Endothelial cell of umbilical vein (primary cell): ENCODE measurements at regions of chr20 and their contacts with region 1.

Region 1: GRCh38 chr20:3753098-3753980 is 14.2 kb downstream of the ADISSP start:
- DNase-seq: peak; percentile 66
- H3K4me3 ChIP-seq: no peak overlapping the region
- H3K27ac ChIP-seq: no peak overlapping the region
- H3K4me1 ChIP-seq: no peaks in the 10 kb centered on the region
- H3K27me3 ChIP-seq: no peaks in the 10 kb centered on the region
- CTCF ChIP-seq: peak; percentile 79 to 89
- POLR2A ChIP-seq: peak; percentile 55

Region 2: GRCh38 chr20:3470627-3471396 is 282.5 kb before region 1 on chr20 and contains the start of gene ATRN:
- CTCF ChIA-PET with region 1: no interaction called
- POLR2A ChIA-PET with region 1: no interaction called
- dilution Hi-C with region 1: no loop called
- intact Hi-C with region 1: no loop called
- DNase-seq: peak; percentile 93
- H3K4me3 ChIP-seq: peak within 1 kb of the TSS; percentile 79 to 87 (median 85)
- H3K27ac ChIP-seq: peak within 1 kb of the TSS; percentile 79
- H3K4me1 ChIP-seq: peaks cover 11% of the 10 kb centered on the region
- H3K27me3 ChIP-seq: peaks cover 10 to 16% of the 10 kb centered on the region in 2 experiments
- CTCF ChIP-seq: no peak
- POLR2A ChIP-seq: peak; percentile 98
- total RNA-seq, gene ATRN: 33.1 and 35.1 TPM in 2 replicates

Region 3: DNA sequence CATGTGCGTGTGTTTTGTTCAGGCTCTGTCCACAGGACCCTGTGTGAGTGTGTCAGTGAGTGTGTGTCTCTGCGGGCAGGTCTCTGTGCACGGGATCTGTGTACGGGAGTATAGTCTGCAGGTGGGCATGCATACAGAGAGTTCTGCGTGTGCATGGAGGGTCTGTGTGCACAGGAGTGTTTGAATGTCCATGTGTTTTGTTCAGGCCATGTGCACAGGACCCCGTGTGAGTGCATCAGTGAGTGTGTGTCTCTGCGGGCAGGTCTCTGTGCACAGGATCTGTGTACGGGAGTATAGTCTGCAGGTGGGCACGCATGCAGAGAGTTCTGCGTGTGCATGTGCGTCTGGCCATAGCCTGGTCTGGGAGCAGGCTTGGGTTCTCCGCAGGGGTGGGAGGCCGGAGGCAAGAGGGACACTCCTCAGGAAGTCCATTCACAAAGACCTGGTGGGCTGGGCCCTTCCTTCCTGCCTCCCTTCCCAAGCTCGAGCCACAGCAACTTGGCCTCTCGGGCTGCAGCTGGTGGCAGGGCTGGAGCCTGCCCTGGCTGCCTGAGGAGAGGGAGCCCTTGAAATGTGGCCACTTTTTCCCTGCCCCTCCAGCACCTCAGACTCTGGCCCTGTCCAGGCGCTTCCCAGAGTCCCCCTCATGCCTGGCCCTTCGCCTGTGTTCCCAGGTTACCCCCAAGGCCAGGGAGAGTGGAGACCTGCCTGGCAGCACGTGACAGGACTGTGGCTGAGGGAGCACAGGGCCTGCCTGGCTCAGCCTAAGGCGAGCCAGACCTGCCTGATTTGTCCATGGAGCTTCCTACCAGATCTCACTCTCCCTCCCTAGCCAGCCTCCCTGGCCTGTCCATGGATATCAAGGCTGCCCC is 14.0 kb before region 1 on chr20:
- CTCF ChIA-PET with region 1: interaction called, 18 read pairs
- POLR2A ChIA-PET with region 1: no interaction called
- dilution Hi-C with region 1: no loop called
- intact Hi-C with region 1: no loop called
- DNase-seq: peak; percentile 49
- H3K4me3 ChIP-seq: no peak overlapping the region
- H3K27ac ChIP-seq: no peak overlapping the region
- H3K4me1 ChIP-seq: peaks cover 12% of the 10 kb centered on the region
- H3K27me3 ChIP-seq: no peaks in the 10 kb centered on the region
- CTCF ChIP-seq: no peak
- POLR2A ChIP-seq: peak; percentile 61

Region 4: DNA sequence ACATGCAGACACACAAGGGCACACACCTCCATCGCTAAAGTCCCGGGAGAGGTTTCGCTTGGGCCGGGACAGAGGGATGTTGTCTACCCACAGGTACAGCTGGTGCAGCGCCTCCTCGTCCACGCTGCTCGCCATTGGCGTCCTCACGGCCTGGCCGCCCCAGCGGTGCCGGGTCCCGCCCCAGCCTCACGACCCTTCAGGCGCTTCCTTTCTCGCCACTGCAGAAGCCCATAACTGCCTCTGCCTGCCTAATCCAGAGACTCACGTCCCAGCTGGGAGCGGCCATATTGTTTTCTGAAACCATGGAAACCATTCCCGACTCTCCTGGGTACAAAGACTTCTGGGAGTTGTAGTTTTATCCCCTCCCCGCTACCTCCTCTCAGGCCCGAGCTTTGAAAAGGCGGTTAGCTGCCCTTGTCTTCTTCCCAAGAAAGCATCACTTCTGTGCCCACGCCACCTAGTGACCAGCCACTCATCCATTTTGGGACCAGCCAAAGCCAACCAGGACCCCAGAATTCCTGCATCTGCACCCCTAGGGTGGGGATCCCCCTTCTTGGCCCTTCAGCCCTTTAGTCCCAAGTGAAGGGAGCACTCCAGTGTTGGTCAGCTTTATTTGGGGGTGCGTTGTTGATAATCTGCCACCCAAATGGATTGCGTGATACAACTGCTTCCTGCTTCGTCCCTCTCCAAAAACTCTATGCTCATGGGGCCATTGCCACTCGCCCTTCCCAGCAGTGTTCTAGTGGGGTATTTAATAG is 28.0 kb after region 1 on chr20 and contains the start of gene SPEF1:
- CTCF ChIA-PET with region 1: interaction called, 12 read pairs
- POLR2A ChIA-PET with region 1: no interaction called
- dilution Hi-C with region 1: no loop called
- intact Hi-C with region 1: loop called (anchors 1 kb)
- DNase-seq: peak; percentile 90
- H3K4me3 ChIP-seq: peak within 1 kb of the TSS in 2 of 3 experiments; percentile 3 to 17
- H3K27ac ChIP-seq: no peak within 1 kb of the TSS
- H3K4me1 ChIP-seq: peaks cover 28% of the 10 kb centered on the region
- H3K27me3 ChIP-seq: peaks cover 8 to 19% of the 10 kb centered on the region in 2 experiments
- CTCF ChIP-seq: peak; percentile 42 to 56
- POLR2A ChIP-seq: peak; percentile 68
- total RNA-seq, gene SPEF1: 0.32 and 0.44 TPM in 2 replicates

Region 5: GRCh38 chr20:3901028-3901705 is 147.8 kb after region 1 on chr20:
- CTCF ChIA-PET with region 1: no interaction called
- POLR2A ChIA-PET with region 1: no interaction called
- dilution Hi-C with region 1: no loop called
- intact Hi-C with region 1: no loop called
- DNase-seq: no peak
- H3K4me3 ChIP-seq: no peak overlapping the region
- H3K27ac ChIP-seq: no peak overlapping the region
- H3K4me1 ChIP-seq: peaks cover 29% of the 10 kb centered on the region
- H3K27me3 ChIP-seq: no peaks in the 10 kb centered on the region
- CTCF ChIP-seq: no peak
- POLR2A ChIP-seq: no peak

Region 6: DNA sequence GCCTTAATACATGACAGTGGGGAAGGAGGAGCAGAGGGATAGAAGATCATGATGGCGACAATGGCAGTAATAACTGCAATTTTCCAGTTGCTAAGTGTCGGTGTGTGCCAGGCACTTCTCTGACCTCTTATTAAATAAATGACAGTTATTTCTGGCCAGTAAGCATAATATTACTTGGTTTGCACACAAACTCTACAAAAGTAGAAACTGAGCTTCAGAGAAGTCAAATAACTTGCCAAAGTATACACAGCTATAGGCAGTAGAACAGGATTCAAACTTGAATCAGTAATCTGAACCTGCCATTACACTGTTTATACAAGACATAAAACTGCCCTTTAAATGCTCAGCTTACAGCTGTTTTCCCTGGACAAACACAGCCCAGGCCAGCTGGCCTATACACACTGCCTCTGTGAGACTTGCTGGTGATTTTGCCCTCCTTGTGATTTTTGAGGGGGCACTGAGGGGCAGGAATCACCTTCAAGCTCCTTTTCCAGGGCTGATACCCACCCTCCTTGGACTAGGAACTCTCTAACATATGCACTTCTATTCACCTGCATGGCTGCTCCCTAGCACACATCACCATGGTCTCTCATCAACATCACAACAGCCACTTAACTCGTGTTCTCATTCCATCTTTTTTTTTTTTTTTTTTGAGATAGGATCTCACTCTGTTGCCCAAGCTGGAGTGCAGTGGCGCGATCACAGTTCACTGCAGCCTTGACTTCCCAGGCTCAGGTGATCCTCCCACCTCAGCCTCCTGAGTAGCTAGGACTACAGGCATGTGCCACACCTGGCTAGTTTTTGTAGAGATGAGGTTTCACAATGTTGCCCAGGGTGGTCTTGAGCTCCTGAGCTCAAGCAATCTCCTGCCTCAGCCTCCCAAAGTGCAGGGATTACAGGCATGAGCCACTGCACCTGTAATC is 1184.3 kb after region 1 on chr20:
- CTCF ChIA-PET with region 1: no interaction called
- POLR2A ChIA-PET with region 1: no interaction called
- dilution Hi-C with region 1: no loop called
- intact Hi-C with region 1: no loop called
- DNase-seq: peak; percentile 52
- H3K4me3 ChIP-seq: no peak overlapping the region
- H3K27ac ChIP-seq: no peak overlapping the region
- H3K4me1 ChIP-seq: no peaks in the 10 kb centered on the region
- H3K27me3 ChIP-seq: no peaks in the 10 kb centered on the region
- CTCF ChIP-seq: no peak
- POLR2A ChIP-seq: no peak